Caco-2 (cell line): ENCODE measurements at regions of chr1 and their contacts with region 1.

Region 1: DNA sequence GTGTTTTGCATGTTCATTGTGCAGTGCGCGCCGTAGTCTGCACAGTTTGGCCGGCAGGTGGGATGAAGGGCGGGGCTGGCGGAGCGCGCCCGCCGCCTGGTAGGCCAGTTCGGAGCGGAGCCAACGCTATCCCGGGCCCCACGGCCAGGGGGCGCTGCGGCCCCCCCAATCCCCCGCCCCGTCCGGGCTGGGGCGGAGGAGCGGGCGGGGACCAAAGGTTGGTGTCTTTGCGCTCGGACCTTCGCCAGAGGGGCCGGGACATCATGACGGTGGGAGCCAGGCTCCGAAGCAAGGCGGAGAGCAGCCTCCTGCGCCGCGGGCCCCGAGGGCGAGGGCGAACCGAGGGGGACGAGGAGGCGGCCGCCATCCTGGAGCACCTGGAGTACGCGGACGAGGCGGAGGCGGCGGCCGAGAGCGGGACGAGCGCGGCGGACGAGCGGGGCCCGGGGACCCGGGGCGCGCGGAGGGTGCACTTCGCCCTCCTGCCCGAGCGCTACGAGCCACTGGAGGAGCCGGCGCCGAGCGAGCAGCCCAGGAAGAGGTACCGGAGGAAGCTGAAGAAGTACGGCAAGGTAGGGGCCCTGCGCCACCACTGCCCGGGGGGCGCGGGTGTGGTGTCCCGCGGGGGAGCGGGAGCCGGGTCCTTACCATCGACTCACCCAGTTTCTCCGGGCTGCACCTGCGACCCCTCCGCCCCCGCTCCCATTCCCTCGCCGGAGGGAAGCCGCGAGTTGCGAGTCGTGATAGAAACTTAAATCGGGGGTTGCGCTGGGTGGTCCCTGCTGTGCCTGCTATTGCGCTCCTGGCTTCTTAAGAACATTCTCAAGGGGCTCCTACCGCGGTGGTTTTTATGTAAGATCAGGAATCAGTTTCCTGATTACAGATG is at the start of gene C1orf115:
- DNase-seq: peak; percentile 80 to 95
- H3K4me3 ChIP-seq: peak within 1 kb of the TSS; percentile 94
- H3K4me3 Mint-ChIP-seq: peak within 1 kb of the TSS; percentile 94
- H3K27ac Mint-ChIP-seq: peak within 1 kb of the TSS; percentile 82
- H3K4me1 ChIP-seq: peaks cover 8% of the 10 kb centered on the region; the same call in 1 of the 2 replicates
- H3K4me1 Mint-ChIP-seq: no peaks in the 10 kb centered on the region
- H3K27me3 ChIP-seq: no peaks in the 10 kb centered on the region
- H3K27me3 Mint-ChIP-seq: no peaks in the 10 kb centered on the region
- CTCF ChIP-seq: peak; percentile 95 to 98
- total RNA-seq, gene C1orf115: 26.5 and 33.9 TPM in 2 replicates

Region 2: DNA sequence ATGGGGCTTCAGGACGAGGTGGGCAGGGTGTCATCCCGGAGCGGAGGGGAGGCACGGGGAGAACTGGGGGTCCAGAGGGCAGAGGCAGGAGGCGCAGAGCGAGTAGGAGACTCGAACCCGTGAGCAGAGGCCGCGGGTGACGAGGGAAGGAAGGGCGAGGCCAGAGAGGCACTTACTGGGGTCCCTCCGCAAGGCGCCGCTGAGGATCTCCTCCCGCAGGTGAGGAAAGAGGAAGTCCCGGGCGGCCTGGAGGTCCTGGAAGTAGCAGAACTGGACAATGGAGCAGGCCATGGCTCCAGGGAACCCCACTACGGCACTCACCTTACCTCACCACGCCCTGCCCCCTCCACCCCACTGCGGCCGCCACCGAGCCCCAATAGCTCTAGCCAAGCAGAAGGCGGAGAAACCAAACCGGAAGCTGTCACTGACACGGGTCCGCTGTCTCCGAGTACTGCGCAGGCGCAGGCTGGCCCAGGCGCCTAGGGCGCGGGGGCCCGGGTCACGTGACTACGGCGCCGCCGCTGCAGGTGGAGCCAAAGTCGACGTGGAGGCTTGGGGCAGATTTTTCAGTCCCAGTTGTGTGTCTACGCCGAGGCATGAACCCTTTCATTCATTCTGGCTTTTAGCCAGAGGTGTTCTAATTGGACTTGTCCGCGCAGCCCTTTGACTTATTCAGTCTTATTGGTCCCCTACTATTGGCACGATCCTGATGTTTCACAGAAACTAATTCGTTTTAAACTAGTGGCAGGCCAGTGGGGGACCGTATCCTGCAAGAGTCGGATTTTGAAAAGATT is 418.1 kb before region 1 on chr1 and contains the start of gene RAB3GAP2:
- CTCF ChIA-PET with region 1: no interaction called
- POLR2A ChIA-PET with region 1: no interaction called
- intact Hi-C with region 1: loop called (anchors 5 kb)
- DNase-seq: peak; percentile 96 to 98
- H3K4me3 ChIP-seq: peak within 1 kb of the TSS; percentile 89
- H3K4me3 Mint-ChIP-seq: no peak within 1 kb of the TSS
- H3K27ac Mint-ChIP-seq: no peak within 1 kb of the TSS
- H3K4me1 ChIP-seq: peaks cover 7% of the 10 kb centered on the region
- H3K4me1 Mint-ChIP-seq: peaks cover 6% of the 10 kb centered on the region
- H3K27me3 ChIP-seq: no peaks in the 10 kb centered on the region
- H3K27me3 Mint-ChIP-seq: peaks cover 11% of the 10 kb centered on the region
- CTCF ChIP-seq: no peak
- total RNA-seq, gene RAB3GAP2: 41.1 and 47.0 TPM in 2 replicates

Region 3: DNA sequence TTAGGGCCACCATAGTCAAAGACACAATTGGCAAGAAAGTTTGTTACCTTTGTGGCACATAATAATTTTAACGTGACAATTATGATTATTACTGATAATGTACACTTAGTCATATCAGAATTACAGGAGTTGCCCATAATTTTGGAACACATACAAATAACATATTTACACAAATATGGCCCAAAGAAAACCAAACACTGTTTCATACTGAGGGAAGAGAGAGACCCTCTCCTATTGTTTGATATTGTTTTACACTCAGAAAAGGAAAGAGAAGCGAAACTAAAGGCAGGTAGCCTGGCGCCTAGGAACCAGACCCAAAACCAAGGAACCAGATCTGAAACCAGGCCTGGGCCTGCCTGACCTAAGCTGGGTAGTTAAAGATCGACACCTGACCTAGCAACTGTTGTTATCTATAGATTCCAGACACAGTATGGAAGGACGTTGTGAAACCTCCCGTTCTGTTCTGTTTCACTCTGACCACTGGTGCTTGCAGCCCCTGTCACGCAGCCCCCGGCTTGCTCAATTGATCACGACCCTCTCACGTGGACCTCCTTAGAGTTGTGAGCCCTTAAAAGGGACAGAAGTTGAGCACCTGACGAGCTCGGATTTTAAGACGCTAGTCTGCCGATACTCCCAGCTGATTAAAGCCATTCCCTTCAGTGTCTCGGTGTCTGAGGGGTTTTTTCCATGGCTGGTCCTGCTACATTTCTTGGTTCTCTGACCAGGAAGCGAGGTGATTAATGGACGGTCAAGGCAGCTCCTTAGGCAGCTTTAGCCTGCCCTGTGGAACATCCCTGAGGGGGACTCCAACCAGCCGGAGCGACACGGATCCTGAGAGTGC is 27.6 kb after region 1 on chr1:
- CTCF ChIA-PET with region 1: no interaction called
- POLR2A ChIA-PET with region 1: no interaction called
- intact Hi-C with region 1: no loop called
- DNase-seq: no peak
- H3K4me3 ChIP-seq: no peak overlapping the region
- H3K4me3 Mint-ChIP-seq: no peak overlapping the region
- H3K27ac Mint-ChIP-seq: no peak overlapping the region
- H3K4me1 ChIP-seq: no peaks in the 10 kb centered on the region
- H3K4me1 Mint-ChIP-seq: no peaks in the 10 kb centered on the region
- H3K27me3 ChIP-seq: no peaks in the 10 kb centered on the region
- H3K27me3 Mint-ChIP-seq: no peaks in the 10 kb centered on the region
- CTCF ChIP-seq: no peak

Region 4: GRCh38 chr1:220748089-220748934 is 57.9 kb after region 1 on chr1 and contains the start of gene MTARC2:
- CTCF ChIA-PET with region 1: interaction called, 3 read pairs
- POLR2A ChIA-PET with region 1: no interaction called
- intact Hi-C with region 1: loop called (anchors 1 kb)
- DNase-seq: peak; percentile 80 to 81
- H3K4me3 ChIP-seq: peak within 1 kb of the TSS; percentile 59
- H3K4me3 Mint-ChIP-seq: peak within 1 kb of the TSS; percentile 77
- H3K27ac Mint-ChIP-seq: peak within 1 kb of the TSS; percentile 47
- H3K4me1 ChIP-seq: no peaks in the 10 kb centered on the region
- H3K4me1 Mint-ChIP-seq: peaks cover 13% of the 10 kb centered on the region
- H3K27me3 ChIP-seq: no peaks in the 10 kb centered on the region
- H3K27me3 Mint-ChIP-seq: no peaks in the 10 kb centered on the region
- CTCF ChIP-seq: no peak
- total RNA-seq, gene MTARC2: 15.8 and 16.5 TPM in 2 replicates

Region 5: DNA sequence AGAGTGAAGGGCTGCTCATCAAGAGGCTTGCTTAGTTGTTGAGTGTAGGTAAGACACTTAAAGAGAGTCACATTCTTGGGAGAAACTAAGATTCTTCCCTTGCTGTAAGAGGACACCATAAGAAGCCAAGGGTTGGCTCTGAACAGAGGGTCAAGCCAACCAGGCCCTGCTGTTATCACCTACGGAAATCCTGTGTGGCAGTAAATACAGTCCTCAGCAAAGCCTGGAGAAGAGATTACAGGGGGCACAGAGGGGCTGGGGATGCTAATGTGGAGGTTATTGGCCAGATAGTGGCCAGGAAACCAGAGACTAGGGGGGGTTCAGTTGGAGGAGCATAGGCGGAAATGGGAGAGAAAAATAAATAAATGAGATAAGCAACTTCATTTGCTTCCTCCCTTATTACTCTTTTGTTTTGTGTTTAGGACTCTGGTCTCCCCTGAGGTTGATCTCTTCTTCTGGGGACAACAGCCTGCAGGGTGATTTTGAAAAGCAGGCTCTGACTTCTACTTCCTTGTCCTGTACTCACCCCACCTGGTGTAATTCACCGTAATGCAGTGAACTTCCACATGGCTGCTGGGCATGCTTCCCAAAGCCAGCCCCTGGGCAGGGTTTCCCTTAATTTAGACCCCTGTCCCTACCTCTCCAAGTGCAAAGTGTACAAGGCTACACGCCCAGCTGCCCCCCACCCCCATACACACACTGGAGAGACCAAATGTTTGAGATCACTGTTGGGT is 137.2 kb after region 1 on chr1:
- CTCF ChIA-PET with region 1: no interaction called
- POLR2A ChIA-PET with region 1: no interaction called
- intact Hi-C with region 1: no loop called
- DNase-seq: no peak
- H3K4me3 ChIP-seq: no peak overlapping the region
- H3K4me3 Mint-ChIP-seq: no peak overlapping the region
- H3K27ac Mint-ChIP-seq: no peak overlapping the region
- H3K4me1 ChIP-seq: no peaks in the 10 kb centered on the region
- H3K4me1 Mint-ChIP-seq: peaks cover 5% of the 10 kb centered on the region
- H3K27me3 ChIP-seq: no peaks in the 10 kb centered on the region
- H3K27me3 Mint-ChIP-seq: no peaks in the 10 kb centered on the region
- CTCF ChIP-seq: no peak